HEK293 (cell line): ENCODE measurements at regions of chr12 and their contacts with region 1.

Region 1: GRCh38 chr12:56636675-56637540 is 6.8 kb upstream of the BAZ2A start:
- H3K4me3 ChIP-seq: peak overlapping the region; percentile 76
- H3K27ac ChIP-seq: peak overlapping the region; percentile 91
- H3K4me1 ChIP-seq: peaks cover 18% of the 10 kb centered on the region
- CTCF ChIP-seq: peak; percentile 90

Region 2: DNA sequence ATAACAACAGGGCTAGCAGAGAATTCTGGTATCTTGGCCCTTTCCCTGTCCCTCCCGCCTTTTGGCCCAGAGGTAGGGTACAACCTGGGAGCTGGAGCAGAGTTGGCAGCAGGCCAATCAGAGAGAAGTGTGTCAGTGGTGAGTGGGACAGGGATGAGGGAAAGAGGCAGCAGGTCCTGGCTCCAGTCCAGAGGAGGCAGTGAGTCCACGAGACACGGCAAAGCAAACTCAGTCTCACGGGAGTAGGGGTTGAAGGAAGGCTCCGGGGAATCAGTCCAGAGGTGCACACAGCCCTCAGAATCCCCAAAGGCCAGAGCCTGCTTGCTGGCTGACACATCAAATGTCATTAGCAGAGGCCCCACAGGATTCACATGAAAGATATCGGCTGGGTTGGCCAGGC is 310.4 kb before region 1 on chr12:
- CTCF ChIA-PET with region 1: no interaction called
- POLR2A ChIA-PET with region 1: no interaction called
- H3K4me3 ChIP-seq: no peak overlapping the region
- H3K27ac ChIP-seq: no peak overlapping the region
- H3K4me1 ChIP-seq: no peaks in the 10 kb centered on the region
- CTCF ChIP-seq: no peak

Region 3: DNA sequence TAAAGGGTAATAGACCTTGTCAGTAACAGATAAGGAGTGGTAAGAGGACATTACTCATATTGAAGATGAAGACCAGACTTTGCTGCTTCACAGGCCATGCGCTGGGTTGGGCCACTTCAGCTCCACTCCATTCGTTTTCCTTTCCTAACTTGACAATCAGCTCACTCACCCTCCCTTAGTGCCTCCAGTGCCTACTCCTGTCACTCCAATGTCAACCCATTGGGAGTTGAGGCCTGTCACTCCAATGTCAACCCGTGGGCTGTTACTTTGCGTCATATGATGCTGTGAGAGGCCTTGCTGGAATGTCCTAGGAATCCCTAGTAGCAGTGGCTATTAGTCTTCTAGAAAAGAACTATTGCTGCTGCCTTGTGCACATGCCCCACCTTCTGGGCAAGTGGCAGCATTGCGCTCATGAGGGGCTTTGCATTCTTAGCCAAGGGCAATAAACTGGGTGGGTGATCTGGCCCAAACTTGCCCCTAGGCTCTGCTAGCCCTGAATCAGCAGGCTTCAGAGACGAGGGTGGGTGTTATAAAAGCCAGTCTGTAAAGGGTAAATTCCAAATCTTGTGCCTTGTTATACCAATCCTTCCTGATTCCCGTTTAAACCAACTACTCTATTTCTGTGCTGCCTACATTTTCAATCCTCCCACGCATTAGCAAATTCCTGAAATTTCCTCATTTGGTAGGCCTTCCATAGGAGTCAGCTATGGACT is 42.8 kb before region 1 on chr12:
- CTCF ChIA-PET with region 1: interaction called, 51 read pairs
- POLR2A ChIA-PET with region 1: interaction called, 3 read pairs
- H3K4me3 ChIP-seq: no peak overlapping the region
- H3K27ac ChIP-seq: peak overlapping the region; percentile 12; the same call in 1 of the 2 replicates
- H3K4me1 ChIP-seq: no peaks in the 10 kb centered on the region; the same call in 1 of the 2 replicates
- CTCF ChIP-seq: peak; percentile 80

Region 4: GRCh38 chr12:56622535-56622934 is 14.4 kb before region 1 on chr12:
- CTCF ChIA-PET with region 1: interaction called, 32 read pairs
- POLR2A ChIA-PET with region 1: interaction called, 14 read pairs
- H3K4me3 ChIP-seq: no peak overlapping the region
- H3K27ac ChIP-seq: no peak overlapping the region
- H3K4me1 ChIP-seq: peaks cover 7% of the 10 kb centered on the region
- CTCF ChIP-seq: no peak

Region 5: GRCh38 chr12:56688129-56688845 is 51.4 kb after region 1 on chr12 and contains the start of gene PTGES3:
- CTCF ChIA-PET with region 1: interaction called, 10 read pairs
- POLR2A ChIA-PET with region 1: interaction called, 27 read pairs
- H3K4me3 ChIP-seq: peak within 1 kb of the TSS; percentile 59
- H3K27ac ChIP-seq: peak within 1 kb of the TSS; percentile 100
- H3K4me1 ChIP-seq: peaks cover 7% of the 10 kb centered on the region; the same call in 1 of the 2 replicates
- CTCF ChIP-seq: peak; percentile 63; the same call in 1 of the 2 replicates